PC-9 (cell line): ENCODE measurements at regions of chr22 and their contacts with region 1.

Region 1: DNA sequence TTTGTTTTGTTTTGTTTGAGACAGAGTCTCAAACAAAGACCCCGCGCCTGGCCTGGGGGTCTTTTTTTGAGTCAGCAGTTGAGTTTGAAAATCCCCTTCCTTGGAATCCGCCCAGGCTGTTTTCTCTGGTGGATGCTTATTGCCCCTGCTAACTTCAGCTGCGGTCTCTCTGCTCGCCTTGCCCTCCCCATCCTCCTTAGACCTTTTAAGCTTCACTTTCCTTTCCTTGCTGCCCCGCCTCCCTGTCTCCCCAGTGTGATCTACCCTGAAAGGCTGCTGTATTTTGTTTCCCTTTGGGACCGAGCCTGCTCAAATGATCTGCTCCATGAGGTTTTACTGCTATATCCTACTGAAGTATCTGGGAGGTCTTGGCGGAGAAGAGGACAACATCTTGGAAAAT is 2.5 kb downstream of the USP18 start:
- DNase-seq: no peak
- H3K4me3 ChIP-seq: no peak overlapping the region
- H3K27ac ChIP-seq: no peak overlapping the region
- H3K4me1 ChIP-seq: 0 out of 2 replicates have a peak, but pooled peaks cover 7% of the 10 kb centered on the region
- H3K27me3 ChIP-seq: no peaks in the 10 kb centered on the region
- CTCF ChIP-seq: no peak

Region 2: DNA sequence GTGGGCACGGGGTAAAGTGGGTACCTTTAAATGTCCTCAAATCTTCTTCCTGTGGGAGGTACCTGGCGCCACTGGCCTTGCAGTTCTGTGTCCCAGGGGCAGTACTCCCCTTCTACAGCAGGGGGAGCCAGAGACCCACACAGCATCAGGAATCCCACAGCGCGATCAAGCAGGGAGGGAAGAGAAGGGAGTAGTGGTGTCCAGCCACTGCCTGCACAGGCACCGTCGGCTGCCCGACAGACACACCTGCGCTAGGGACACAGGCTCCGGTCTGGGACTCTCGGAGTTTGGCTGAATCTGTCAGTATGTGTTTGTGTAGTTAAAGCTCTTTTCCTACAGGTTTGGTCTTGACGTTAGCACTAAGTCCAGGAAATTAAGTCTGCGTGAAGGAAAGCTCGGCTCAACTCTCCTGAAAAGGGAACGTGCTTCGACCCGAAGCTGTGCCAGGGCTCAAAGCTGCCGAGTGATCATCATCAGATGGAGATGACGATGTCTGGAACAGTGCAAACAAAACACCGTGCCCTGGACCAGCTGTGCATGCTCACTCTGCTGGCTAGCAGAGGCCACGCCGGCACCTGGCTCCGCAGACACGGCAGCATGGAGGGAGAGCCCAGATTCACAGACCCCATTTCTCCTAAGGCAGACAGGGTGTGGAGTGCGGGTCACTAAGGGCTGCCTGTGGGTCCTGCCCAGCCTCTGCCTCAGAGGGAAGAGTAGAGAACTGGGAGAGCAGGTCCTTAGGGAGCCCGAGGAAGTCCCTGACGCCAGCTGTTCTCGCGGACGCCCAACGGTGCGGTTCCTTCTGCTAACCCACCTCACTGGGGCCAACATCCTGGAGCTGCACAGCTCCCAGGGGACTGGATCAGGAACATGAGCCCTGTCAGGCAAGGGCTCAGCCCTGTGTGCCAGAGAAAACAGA is 322.2 kb before region 1 on chr22:
- CTCF ChIA-PET with region 1: no interaction called
- POLR2A ChIA-PET with region 1: no interaction called
- intact Hi-C with region 1: loop called (anchors 1 kb)
- DNase-seq: peak; percentile 50 to 81
- H3K4me3 ChIP-seq: no peak overlapping the region
- H3K27ac ChIP-seq: no peak overlapping the region
- H3K4me1 ChIP-seq: no peaks in the 10 kb centered on the region
- H3K27me3 ChIP-seq: no peaks in the 10 kb centered on the region
- CTCF ChIP-seq: peak; percentile 91

Region 3: GRCh38 chr22:18024276-18024947 is 128.1 kb before region 1 on chr22 and contains the start of gene MICAL3:
- CTCF ChIA-PET with region 1: no interaction called
- POLR2A ChIA-PET with region 1: no interaction called
- intact Hi-C with region 1: no loop called
- DNase-seq: peak in 1 of 2 experiments; percentile 58
- H3K4me3 ChIP-seq: peak within 1 kb of the TSS; percentile 71
- H3K27ac ChIP-seq: no peak within 1 kb of the TSS
- H3K4me1 ChIP-seq: peaks cover 5% of the 10 kb centered on the region; the same call in 1 of the 2 replicates
- H3K27me3 ChIP-seq: no peaks in the 10 kb centered on the region
- CTCF ChIP-seq: peak; percentile 38; the same call in 1 of the 2 replicates
- total RNA-seq, gene MICAL3: 23.8 and 27.4 TPM in 2 replicates

Region 4: DNA sequence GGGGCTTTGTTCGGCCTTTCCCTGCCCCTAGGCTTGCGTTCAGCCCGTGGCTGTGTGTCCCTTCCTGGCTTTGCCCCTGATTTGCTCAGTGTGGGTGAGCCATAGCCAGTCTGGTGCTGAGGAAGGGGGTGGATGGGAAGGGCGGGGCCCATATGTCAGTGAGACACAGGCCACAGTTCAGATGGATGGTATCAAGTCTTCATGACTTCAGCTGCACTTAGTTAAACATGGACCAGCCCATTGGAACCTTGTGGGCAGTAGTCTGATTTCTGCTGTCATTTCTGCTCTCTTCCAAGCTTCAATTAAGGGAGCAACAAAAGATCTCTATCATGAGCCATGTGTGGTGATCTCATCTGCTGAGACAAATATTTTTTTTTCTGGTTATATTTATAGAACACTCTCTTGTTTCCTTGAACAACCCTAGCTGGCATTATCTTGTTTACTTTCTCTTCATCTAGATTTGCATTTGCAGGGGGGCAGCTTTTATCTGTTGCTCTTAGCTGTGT is 96.3 kb before region 1 on chr22:
- CTCF ChIA-PET with region 1: no interaction called
- POLR2A ChIA-PET with region 1: no interaction called
- intact Hi-C with region 1: no loop called
- DNase-seq: no peak
- H3K4me3 ChIP-seq: no peak overlapping the region
- H3K27ac ChIP-seq: no peak overlapping the region
- H3K4me1 ChIP-seq: peaks cover 16% of the 10 kb centered on the region
- H3K27me3 ChIP-seq: no peaks in the 10 kb centered on the region
- CTCF ChIP-seq: no peak